CD4-positive, alpha-beta memory T cell (primary cell): ENCODE measurements at regions of chr9 and their contacts with region 1.

Region 1: DNA sequence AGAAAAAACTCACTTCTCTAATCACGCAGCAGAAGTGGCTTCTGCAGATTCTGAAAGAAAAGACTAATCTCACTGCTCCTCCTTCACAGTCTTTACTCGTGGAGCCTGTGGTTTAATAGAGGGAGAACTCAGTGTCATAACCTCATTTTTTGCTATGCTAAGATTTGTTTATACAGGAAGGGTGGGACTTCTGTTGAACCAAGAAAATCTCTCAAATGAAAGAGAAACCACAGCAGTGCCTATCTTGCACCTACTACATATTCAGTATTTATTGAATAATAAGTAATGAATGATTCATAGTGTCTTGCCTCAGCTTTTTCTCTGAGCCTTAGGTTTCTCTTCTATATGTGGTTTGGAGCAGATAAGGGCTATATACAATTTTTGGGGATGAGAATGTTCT is 136.1 kb upstream of the DMAC1 start:
- DNase-seq: peak; percentile 41 to 81 (median 73)
- H3K4me3 ChIP-seq: peak overlapping the region in 1 of 2 donors; percentile 44
- H3K4me3 Mint-ChIP-seq: peak overlapping the region; percentile 55 to 91 (median 76)
- H3K27ac ChIP-seq: peak overlapping the region; percentile 65
- H3K27ac Mint-ChIP-seq: peak overlapping the region; percentile 87 to 98 (median 96)
- H3K4me1 ChIP-seq: peaks cover 28% of the 10 kb centered on the region
- H3K4me1 Mint-ChIP-seq: peaks cover 22 to 32% (median 28%) of the 10 kb centered on the region in 4 donors
- H3K27me3 ChIP-seq: no peaks in the 10 kb centered on the region
- H3K27me3 Mint-ChIP-seq: no peaks in the 10 kb centered on the region

Region 2: DNA sequence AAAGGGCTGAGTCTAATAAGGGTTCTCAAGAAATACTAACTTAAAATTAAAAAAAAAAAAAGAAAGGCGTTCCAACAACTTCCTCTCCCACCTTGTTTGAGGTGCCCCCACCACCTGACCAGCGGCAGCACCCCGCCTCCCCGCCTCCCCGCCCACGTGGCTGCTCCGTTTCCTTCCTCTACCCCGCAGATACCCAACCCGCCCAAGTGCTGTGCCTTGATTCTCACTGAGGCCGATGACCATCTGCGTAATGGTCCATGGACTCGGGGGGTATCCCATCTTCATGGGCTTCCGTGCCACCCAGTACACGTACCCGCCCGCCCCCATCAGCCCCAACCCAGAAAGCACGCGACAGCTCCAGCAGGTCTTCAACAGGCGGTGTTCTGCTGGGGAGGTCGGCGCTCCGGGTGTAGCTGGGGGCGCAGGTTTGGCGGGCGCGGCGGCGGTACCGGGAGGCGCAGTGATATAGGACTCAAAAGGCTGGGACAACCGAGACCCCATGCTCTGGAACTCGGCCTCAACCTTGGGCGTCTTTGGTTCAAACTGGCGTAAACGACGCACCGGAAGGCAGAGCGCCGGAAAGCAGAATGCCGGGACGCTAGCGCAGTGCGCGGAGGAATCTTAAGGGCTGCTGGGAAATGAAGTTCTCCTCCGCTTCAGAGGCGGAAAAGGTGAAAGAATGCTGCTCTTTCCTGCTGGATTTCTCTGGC is 136.3 kb before region 1 on chr9 and contains the start of gene DMAC1:
- CTCF ChIA-PET with region 1: no interaction called
- POLR2A ChIA-PET with region 1: interaction called, 3 read pairs
- intact Hi-C with region 1: loop called (anchors 1 kb)
- DNase-seq: peak; percentile 72 to 81 (median 77)
- H3K4me3 ChIP-seq: peak within 1 kb of the TSS; percentile 27 to 92
- H3K4me3 Mint-ChIP-seq: peak within 1 kb of the TSS; percentile 92 to 99 (median 95)
- H3K27ac ChIP-seq: peak within 1 kb of the TSS; percentile 88
- H3K27ac Mint-ChIP-seq: peak within 1 kb of the TSS; percentile 94 to 96 (median 96)
- H3K4me1 ChIP-seq: peaks cover 25% of the 10 kb centered on the region
- H3K4me1 Mint-ChIP-seq: peaks cover 17 to 55% (median 25%) of the 10 kb centered on the region in 4 donors
- H3K27me3 ChIP-seq: no peaks in the 10 kb centered on the region
- H3K27me3 Mint-ChIP-seq: no peaks in the 10 kb centered on the region
- total RNA-seq, gene DMAC1: 30.8 to 38.0 TPM

Region 3: DNA sequence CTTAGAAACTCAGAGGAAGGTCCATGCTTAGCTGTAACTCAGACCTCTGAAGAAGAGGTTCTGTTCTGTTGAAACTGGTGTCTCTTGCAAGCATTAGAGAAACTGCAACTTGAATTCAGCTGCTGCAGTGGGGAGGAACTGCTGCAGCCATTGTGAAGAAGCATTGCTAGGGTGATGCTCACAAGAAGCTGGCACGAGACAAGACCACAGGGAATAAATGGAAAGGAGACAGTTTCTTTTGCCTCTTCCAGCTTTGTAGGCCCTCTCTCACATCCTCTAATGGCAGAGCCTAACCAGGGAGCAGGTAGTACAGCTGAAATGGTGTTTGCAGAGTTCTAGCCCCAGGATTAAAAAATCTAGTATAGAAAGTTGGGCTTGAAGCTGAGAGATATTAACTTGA is 11.9 kb after region 1 on chr9:
- CTCF ChIA-PET with region 1: interaction called, 3 read pairs
- POLR2A ChIA-PET with region 1: interaction called, 11 read pairs
- intact Hi-C with region 1: no loop called
- DNase-seq: no peak
- H3K4me3 ChIP-seq: no peak overlapping the region
- H3K4me3 Mint-ChIP-seq: no peak overlapping the region
- H3K27ac ChIP-seq: no peak overlapping the region
- H3K27ac Mint-ChIP-seq: peak overlapping the region in 1 of 7 donors; percentile 35
- H3K4me1 ChIP-seq: peaks cover 9% of the 10 kb centered on the region
- H3K4me1 Mint-ChIP-seq: peaks cover 0 to 10% (median 7%) of the 10 kb centered on the region in 4 donors
- H3K27me3 ChIP-seq: no peaks in the 10 kb centered on the region
- H3K27me3 Mint-ChIP-seq: no peaks in the 10 kb centered on the region

Region 4: DNA sequence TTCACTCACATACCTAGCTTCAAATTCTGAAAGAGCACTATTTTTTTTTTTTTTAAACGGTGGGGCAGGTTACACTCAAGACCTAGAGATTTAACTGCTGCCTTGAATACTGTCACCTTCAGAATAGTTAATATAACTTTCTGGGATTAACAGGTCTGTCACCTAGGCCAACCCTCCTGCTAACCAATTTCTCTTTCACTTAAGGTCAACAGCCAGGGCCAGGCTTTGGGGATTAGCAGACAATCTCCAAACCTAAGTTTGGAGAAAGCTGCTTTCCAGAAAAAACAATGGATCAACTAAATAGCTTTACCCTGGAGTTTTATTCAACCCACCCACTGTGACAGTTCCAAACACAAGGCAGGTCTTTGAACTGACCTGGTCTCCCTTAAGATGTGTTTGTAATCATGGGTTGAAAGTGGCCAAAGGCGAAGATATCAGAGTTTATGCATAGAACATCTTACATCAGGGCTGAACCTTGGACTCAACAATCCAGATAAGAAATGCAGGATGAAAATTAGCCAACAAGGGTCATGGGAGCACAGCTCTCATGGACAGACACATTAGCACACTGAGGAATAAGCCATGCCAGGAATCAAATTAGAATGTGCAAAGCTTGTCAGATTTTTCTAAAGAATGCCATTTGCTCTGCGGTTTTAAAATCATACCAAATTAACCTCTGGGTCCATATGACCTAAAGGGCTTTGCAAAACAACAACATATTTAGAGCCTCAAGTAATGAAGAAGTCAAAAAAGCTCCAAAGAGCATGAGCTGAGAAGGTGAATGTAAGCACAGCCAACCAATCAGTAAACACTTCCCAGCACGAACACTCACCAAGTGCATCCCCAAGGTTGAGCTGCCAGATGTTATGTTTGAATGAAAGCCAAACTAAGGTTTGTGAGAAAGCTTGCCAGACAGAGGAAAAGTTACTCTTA is 402.4 kb after region 1 on chr9:
- CTCF ChIA-PET with region 1: no interaction called
- POLR2A ChIA-PET with region 1: no interaction called
- intact Hi-C with region 1: no loop called
- DNase-seq: no peak
- H3K4me3 ChIP-seq: no peak overlapping the region
- H3K4me3 Mint-ChIP-seq: no peak overlapping the region
- H3K27ac ChIP-seq: no peak overlapping the region
- H3K27ac Mint-ChIP-seq: no peak overlapping the region
- H3K4me1 ChIP-seq: no peaks in the 10 kb centered on the region
- H3K4me1 Mint-ChIP-seq: no peaks in the 10 kb centered on the region
- H3K27me3 ChIP-seq: no peaks in the 10 kb centered on the region
- H3K27me3 Mint-ChIP-seq: no peaks in the 10 kb centered on the region